SK-N-SH (cell line): ENCODE measurements at regions of chr6 and their contacts with region 1.

Region 1: DNA sequence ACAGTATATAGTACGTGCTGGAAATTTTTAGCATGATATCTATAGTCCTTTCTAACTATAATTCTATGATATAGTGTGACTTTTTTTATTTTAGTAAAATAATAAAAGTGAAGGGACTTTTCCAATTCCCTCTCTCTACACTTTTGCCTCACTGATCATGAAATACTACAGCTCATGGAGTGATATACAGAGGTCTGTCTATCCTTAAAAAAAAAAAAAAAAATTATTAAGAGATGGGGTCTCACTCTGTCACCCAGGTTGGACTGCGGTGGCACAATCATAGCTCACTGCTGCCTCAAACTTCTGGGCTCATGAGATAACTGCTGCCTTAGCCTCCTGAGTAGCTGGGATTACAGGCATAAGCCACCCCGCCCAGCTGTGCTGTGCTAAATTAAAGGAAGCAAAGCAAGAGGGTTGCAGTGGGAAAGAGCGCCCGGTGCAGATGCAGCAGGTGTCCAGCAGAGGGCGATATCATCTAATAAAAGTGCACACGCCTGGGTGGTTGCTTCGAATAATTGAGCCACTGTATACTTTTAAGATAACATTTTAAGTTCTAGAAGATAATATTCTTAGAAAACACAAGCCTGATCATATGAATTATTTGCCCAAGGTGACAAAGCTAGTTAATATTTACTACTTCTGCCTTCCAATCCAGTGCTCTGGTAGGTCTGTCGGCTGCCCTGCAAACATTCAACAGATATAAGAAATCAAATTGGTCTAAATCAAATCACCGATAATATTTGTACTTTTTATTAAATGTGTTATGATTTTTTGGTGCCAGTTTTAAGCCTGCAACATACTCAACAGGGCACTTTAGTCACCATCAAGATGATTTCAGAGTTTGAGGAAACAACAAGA is 94.9 kb upstream of the NT5E start:
- DNase-seq: peak; percentile 56
- H3K4me3 ChIP-seq: peak overlapping the region in 1 of 2 experiments; percentile 30; a peak in 1 of 4 replicates
- H3K27ac ChIP-seq: no peak overlapping the region
- H3K4me1 ChIP-seq: peaks cover 0 to 8% of the 10 kb centered on the region in 2 experiments; a peak in 3 of 4 replicates
- H3K27me3 ChIP-seq: no peaks in the 10 kb centered on the region
- CTCF ChIP-seq: peak; percentile 96
- EP300 ChIP-seq: no peak
- RAD21 ChIP-seq: peak; percentile 89

Region 2: DNA sequence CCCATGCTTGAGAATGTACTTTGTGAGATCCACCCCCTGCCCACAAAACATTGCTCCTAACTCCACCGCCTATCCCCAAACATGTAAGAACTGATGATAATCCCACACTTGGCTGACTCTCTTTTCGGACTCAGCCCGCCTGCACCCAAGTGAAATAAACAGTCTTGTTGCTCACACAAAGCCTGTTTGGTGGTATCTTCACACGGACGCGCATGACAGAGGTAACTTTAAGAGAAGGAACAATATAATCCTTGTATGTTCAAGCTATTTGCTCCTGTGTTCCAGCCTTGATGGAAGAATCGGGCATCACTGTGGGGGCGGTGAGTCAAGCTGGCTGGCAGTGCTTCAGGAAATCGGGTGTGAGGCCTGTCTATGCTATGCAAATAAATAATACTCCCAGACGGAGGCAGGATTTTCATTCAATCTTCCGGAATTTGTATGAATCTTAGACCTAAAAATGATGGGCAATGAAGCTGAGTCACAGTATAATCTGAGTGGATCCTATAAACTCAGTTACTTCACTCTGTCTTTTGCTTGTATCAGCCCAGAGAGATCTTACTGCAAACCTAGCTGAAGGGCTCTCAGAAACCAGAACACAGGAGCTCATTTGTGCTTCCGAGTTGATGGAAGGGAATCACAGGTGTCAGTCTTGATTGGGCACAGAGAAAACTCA is 49.6 kb after region 1 on chr6:
- CTCF ChIA-PET with region 1: no interaction called
- POLR2A ChIA-PET with region 1: no interaction called
- DNase-seq: no peak
- H3K4me3 ChIP-seq: peak overlapping the region; percentile 6 to 56; a peak in 3 of 4 replicates
- H3K27ac ChIP-seq: peak overlapping the region; percentile 92 to 98
- H3K4me1 ChIP-seq: peaks cover 11 to 51% of the 10 kb centered on the region in 2 experiments
- H3K27me3 ChIP-seq: no peaks in the 10 kb centered on the region
- CTCF ChIP-seq: 0 out of 2 replicates have a peak, but pooled peaks have one; percentile 14
- EP300 ChIP-seq: peak in 1 of 2 experiments; percentile 94; a peak in 2 of 4 replicates
- RAD21 ChIP-seq: no peak

Region 3: DNA sequence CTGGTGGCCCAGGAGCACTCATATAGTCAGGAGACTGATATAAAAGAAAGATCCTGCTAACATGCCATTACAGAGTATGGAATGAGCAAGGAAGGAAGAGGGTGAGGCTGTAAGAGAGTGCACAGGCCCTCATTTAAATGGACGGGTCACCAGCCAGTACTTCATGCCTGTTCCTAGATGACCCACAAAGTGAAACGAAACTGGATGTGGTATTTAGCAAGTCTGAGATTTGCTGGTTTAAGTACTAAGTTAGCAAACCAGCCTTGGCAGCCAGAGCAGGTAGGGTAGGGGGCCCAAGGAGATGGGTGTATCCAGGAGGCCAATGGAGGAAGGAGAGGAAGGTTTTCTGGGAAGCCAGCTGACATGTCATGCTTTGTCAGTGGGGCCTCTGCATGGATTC is 110.8 kb after region 1 on chr6:
- CTCF ChIA-PET with region 1: interaction called, 10 read pairs
- POLR2A ChIA-PET with region 1: no interaction called
- DNase-seq: no peak
- H3K4me3 ChIP-seq: no peak overlapping the region
- H3K27ac ChIP-seq: peak overlapping the region; percentile 88 to 100
- H3K4me1 ChIP-seq: peaks cover 5 to 81% of the 10 kb centered on the region in 2 experiments
- H3K27me3 ChIP-seq: no peaks in the 10 kb centered on the region
- CTCF ChIP-seq: no peak
- EP300 ChIP-seq: no peak
- RAD21 ChIP-seq: no peak

Region 4: DNA sequence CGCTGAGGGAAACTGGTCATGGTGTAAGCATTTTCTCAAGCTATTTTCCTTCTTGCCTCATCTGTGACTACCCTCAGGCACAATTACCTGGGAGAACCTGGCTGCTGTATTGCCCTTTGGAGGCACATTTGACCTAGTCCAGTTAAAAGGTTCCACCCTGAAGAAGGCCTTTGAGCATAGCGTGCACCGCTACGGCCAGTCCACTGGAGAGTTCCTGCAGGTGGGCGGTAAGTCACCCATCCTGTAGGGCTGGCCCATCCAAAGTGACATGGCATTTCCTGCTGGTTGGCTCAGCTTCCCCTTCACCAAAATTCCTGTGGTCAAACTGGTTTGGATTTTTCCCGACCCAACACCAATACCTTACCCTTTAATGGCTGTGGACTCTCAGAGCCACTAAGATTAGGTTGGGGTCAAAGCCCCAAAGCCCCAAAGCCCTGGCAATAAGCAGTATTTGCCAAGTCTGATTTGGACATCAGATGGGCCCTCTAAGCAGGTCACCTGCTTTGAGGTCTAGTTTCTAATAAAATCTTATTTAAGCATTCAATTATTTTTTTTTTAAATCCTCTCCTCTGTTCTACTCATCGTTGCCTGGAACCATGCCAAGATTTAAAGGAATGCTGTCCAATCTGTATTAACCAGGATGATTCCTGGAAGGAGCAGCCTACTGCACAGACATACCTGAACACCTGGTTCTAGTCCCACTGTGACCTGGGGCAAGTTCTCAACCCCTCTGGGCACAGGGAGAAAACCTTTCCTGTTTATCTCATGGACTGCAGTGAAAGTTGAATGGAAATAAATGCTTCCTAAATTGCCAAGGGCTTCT is 135.7 kb after region 1 on chr6:
- CTCF ChIA-PET with region 1: interaction called, 19 read pairs
- POLR2A ChIA-PET with region 1: no interaction called
- DNase-seq: no peak
- H3K4me3 ChIP-seq: no peak overlapping the region
- H3K27ac ChIP-seq: peak overlapping the region; percentile 21 to 76
- H3K4me1 ChIP-seq: peaks cover 3 to 11% of the 10 kb centered on the region in 2 experiments; a peak in 3 of 4 replicates
- H3K27me3 ChIP-seq: no peaks in the 10 kb centered on the region
- CTCF ChIP-seq: no peak
- EP300 ChIP-seq: peak; percentile 23 to 62; a peak in 2 of 4 replicates
- RAD21 ChIP-seq: no peak

Region 5: DNA sequence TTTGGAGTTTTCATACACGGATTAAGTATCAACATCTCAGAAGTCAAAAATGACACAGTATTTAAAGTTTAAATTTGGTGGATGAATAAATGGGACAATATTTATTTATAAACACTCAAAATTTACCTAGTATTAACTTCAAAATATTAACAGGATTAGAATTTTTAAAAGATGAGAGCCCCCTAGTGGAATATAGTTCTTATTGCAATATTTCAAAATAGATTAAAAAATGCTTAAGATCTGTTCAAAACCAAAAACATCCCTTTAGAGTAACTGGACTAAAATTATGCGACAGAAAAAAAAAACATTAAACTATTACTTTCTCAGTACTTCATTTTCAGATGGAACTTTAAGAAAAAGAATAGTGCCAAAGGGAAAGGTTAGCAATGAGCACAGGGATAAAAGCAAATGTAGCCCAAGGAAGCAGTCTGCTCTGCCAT is 182.1 kb after region 1 on chr6:
- CTCF ChIA-PET with region 1: interaction called, 11 read pairs
- POLR2A ChIA-PET with region 1: no interaction called
- DNase-seq: peak; percentile 14
- H3K4me3 ChIP-seq: no peak overlapping the region; a peak in 1 of 4 replicates
- H3K27ac ChIP-seq: peak overlapping the region in 1 of 2 experiments; percentile 20; a peak in 1 of 4 replicates
- H3K4me1 ChIP-seq: no peaks in the 10 kb centered on the region
- H3K27me3 ChIP-seq: no peaks in the 10 kb centered on the region
- CTCF ChIP-seq: peak; percentile 85
- EP300 ChIP-seq: no peak
- RAD21 ChIP-seq: peak; percentile 18; the same call in 1 of the 2 replicates